ENCODE measurements at regions of chr2 and their contacts with region 1.

Region 1: DNA sequence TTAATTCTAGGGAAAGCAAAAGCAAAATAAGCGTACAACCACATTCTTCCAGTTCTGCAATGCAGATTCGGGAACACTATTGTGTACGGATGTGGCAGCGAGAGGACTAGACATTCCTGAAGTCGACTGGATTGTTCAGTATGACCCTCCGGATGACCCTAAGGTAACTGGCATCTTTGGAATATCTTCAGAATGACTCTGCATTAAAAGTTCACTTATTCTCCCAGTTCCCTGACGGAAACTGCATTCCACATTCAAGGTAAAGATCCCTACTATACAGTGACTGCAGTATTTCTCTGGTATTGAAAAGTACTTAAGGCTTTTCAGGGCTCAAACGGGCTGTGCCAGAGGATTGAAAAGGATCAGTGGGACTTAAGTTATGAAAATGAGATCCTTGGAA is 10.9 kb downstream of the DDX18 start:
- DNase-seq: no peak
- H3K4me3 ChIP-seq: no peak overlapping the region
- H3K27ac ChIP-seq: no peak overlapping the region
- H3K4me1 ChIP-seq: no peaks in the 10 kb centered on the region
- H3K27me3 ChIP-seq: no peaks in the 10 kb centered on the region
- CTCF ChIP-seq: no peak
- EP300 ChIP-seq: no peak
- POLR2A ChIP-seq: no peak

Region 2: GRCh38 chr2:117170897-117171296 is 654.5 kb before region 1 on chr2:
- intact Hi-C with region 1: no loop called
- DNase-seq: no peak
- H3K4me3 ChIP-seq: no peak overlapping the region
- H3K27ac ChIP-seq: no peak overlapping the region
- H3K4me1 ChIP-seq: no peaks in the 10 kb centered on the region
- H3K27me3 ChIP-seq: no peaks in the 10 kb centered on the region
- CTCF ChIP-seq: no peak
- EP300 ChIP-seq: no peak
- POLR2A ChIP-seq: no peak

Region 3: DNA sequence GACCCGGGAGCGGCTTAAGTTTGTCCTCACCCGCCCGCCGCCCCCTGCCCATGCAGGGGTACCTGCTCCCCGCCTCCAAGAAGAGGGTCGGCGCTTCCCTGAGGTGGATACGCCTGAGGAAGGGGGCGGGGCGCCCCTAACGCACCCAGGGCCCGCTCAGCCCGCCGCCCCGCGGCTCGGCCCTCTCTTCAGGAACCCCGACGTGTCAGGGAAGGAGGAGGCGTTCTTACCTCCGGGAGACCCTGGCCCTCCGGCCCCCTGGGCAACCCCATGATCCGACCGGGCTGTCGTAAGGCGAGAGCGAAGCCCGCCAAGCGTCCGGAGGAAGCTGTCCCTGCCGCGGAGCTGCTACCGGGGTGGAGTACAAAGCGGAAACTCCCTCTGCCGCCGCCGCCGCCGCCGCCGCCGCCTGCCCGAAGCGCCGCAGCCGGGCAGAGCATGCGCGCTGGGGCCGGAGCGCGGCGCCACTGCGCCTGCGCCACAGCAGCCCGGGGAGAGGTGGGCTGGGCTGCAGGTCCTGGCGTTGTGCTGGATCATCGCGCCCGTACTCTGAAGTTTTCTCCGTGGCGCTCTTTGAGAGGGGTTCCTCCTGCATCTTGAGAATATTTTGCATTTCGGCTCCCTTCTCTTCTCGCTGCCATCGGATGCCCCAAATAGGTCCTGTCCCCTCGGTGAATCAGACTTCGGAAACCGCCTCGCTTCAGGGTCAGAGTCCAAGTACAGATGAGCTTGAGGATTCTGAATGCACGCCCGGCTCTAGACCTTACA is 188.5 kb after region 1 on chr2 and contains the start of gene CCDC93:
- intact Hi-C with region 1: loop called (anchors 5 kb)
- DNase-seq: peak; percentile 83 to 97
- H3K4me3 ChIP-seq: peak within 1 kb of the TSS; percentile 88 to 97 (median 93)
- H3K27ac ChIP-seq: peak within 1 kb of the TSS; percentile 88 to 96 (median 92)
- H3K4me1 ChIP-seq: peaks cover 16 to 45% (median 31%) of the 10 kb centered on the region in 4 donors
- H3K27me3 ChIP-seq: no peaks in the 10 kb centered on the region
- CTCF ChIP-seq: no peak
- EP300 ChIP-seq: no peak
- POLR2A ChIP-seq: no peak
- total RNA-seq, gene CCDC93: 15.6 to 63.9 (median 33.3) TPM

Measured in stomach (tissue), 19 donors.